HEK293T (cell line): ENCODE measurements at regions of chr11 and their contacts with region 1.

Region 1: DNA sequence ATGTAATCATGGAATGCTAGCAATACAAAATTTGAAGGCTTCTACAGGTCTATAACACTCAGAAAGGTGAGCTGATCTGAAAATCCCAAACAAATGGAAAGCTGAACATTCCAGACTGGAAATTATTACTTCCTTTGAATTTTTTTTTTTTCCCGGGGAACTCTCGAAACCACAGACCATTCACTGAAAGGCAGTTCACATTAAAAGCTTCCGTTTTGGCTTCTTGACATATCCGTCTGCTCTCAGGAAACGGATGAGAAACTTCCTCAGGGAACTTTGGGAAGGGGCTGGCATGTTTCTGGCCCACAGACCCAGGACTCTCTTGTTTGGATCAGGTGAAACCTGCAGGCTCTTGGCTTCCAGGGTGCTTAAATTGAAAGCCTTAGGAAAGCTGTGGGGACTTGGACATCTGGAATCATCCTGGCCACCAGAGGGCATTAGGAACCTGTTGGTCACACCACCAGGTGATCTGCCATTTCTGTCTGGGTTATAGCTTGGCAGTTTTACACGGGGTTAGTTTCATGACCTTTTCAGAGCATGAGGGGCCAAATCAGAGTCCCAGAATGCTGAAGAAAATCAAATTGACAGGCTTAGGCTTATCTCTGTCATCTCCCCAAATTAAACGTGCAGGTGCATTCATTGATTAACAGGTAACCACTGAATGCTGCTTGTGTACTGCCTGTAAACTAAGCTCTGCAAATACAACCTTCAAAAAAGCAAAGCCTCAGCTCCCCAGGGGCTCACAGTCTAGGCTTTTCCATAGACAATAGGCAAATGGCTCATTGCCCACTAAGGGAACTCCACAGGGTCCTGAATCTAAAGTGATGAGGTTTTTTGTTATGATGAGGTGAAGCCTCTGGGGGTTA is 22.7 kb upstream of the GRAMD1B start:
- DNase-seq: peak; percentile 67

Region 2: DNA sequence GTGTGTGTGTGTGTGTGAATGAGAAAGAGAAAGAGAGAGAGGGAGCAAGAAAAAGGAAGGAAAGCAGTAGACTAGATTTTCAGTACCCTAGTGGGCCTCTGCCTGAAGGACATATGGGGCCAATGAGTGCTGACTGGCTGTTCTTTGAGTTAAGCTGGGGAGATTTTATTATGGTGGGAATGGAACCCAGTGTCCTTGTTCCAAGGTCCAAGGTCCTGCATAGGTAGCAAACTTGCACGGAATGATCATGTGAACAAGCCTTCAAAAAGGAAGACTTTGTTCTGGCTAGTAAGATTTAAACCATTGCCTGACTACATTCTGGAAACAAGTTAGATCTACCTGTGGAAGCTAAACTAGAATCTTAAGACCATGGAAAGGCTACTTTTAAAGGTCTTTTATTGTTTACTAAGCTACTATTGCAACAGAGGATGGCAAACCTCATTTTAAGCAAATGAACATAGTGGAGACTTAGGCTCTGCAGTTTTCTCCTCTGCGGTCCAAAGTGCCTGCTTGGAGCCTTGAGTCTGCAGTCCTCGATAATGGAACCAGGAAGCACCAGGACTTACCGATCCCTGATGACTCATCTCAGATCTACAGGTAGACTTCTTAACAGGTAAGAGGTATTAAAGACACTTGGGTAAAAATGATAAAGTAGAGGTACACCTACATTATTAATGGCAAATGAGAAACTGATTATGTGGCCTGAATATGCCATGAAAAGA is 12.5 kb after region 1 on chr11:
- CTCF ChIA-PET with region 1: interaction called, 14 read pairs
- POLR2A ChIA-PET with region 1: no interaction called
- DNase-seq: no peak

Region 3: GRCh38 chr11:123426789-123427188 is 19.4 kb after region 1 on chr11:
- CTCF ChIA-PET with region 1: interaction called, 10 read pairs
- POLR2A ChIA-PET with region 1: interaction called, 5 read pairs
- DNase-seq: no peak

Region 4: DNA sequence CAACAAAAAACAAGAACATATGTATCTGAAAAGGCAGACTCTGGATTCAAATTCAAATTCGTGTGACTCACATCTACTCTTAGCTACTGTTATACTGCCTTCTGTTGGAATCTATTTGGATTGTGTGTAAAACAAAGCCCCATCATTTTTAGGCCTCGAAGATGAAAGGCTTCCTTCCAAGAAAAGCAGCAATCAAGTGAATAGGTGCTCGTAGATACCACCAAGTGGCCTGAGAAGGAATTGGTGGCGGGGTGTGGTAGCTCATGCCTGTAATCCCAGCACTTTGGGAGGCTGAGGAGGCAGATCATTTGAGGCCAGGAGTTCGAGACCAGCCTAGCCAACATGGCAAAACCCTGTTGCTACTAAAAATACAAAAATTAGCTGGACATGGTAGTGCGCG is 26.9 kb after region 1 on chr11:
- CTCF ChIA-PET with region 1: interaction called, 11 read pairs
- POLR2A ChIA-PET with region 1: interaction called, 5 read pairs
- DNase-seq: peak; percentile 45

Region 5: GRCh38 chr11:123478352-123478987 is 71.1 kb after region 1 on chr11:
- CTCF ChIA-PET with region 1: interaction called, 31 read pairs
- POLR2A ChIA-PET with region 1: no interaction called
- DNase-seq: peak; percentile 80